Activated T-helper 1 cell treated with anti-CD3 and anti-CD28 coated beads, Interleukin-12 subunit alpha, Interleukin-12 subunit beta, Interleukin-2, Interleukin-4 antibody, amounts not matched to agents 30 ng/mL and 10 ng/mL and 1 ng/mL, durations not matched to agents 14 hours and 24 hours and 36 hours (primary cell): ENCODE measurements at regions of chr1 and their contacts with region 1.

Region 1: DNA sequence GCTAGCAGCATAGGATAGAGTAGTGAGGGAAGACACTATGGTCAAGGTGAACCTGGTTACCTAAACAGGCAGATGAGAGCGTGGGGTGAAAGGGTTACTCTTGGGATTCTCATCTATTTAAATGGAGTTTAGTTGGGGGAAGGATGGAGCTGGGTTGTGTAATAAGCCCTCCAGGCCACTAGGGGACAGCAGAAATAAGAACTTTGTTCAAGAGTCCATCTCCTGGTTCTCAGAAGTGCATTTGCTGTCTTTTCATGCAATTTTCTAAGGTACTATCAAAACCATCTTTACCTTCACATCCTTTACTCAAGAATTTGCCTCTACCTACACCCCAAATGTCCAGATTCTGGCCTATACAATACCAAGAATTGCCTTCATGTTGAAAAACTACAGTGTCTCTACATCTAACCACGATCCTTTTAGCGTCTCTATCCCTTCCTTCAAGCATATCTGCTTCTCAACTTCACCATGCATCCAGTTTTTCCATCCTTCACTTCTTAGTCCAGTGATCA is 28.0 kb downstream of the SLAMF1 start:
- DNase-seq: no peak
- H3K4me3 Mint-ChIP-seq: peak overlapping the region; percentile 24
- H3K27ac Mint-ChIP-seq: peak overlapping the region; percentile 51
- H3K4me1 Mint-ChIP-seq: peaks cover 76% of the 10 kb centered on the region
- H3K27me3 Mint-ChIP-seq: no peaks in the 10 kb centered on the region

Region 2: DNA sequence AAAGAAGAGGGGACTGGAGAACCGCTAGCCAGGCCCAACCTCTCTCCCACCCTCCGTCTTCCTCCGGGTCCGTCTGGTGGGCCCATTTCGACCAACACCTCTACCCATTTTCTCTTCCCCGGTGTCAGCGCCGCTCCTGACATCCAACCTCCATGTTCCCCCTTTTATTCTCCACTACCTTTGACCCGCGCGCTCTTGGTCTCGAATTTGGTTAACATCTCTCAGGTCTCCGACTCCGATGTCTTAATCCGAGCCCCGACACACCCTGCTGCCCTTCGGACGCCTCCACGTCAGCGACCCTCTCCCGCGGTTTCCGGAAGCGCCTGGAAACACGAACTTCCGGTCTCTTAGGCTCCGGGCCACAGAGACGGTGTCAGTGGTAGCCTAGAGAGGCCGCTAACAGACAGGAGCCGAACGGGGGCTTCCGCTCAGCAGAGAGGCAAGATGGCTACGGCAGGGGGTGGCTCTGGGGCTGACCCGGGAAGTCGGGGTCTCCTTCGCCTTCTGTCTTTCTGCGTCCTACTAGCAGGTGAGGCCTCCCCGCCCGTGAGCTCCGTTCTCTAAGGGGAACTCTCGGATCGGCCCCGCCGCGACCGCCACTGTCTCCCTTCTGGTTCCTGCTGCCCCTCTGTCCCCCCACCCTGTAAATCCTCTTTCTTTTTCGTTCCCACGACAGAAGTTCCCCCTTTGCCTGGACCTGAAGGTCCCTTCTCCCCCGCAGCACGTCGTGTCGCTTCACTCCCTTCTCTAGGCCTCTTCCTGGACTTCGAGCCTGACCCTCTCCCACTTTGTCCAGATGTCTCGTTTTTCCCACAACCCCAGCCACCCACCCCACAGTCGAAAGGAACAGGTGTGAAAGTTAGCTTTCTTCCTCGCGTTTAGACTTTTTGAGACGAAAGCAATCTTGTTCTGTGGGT is 275.6 kb before region 1 on chr1 and contains the starts of genes COPA and NCSTN:
- intact Hi-C with region 1: loop called (anchors 5 kb)
- DNase-seq: peak; percentile 88
- H3K4me3 Mint-ChIP-seq: peak within 1 kb of the TSS; percentile 100
- H3K27ac Mint-ChIP-seq: peak within 1 kb of the TSS; percentile 99
- H3K4me1 Mint-ChIP-seq: peaks cover 61% of the 10 kb centered on the region
- H3K27me3 Mint-ChIP-seq: no peaks in the 10 kb centered on the region
- total RNA-seq, gene COPA: 123 and 126 TPM in 2 replicates
- total RNA-seq, gene NCSTN: 74.8 and 81.6 TPM in 2 replicates

Region 3: GRCh38 chr1:160575112-160575664 is 43.6 kb before region 1 on chr1:
- intact Hi-C with region 1: loop called (anchors 2 kb)
- DNase-seq: no peak
- H3K4me3 Mint-ChIP-seq: peak overlapping the region; percentile 79
- H3K27ac Mint-ChIP-seq: peak overlapping the region; percentile 84
- H3K4me1 Mint-ChIP-seq: peaks cover 96% of the 10 kb centered on the region
- H3K27me3 Mint-ChIP-seq: no peaks in the 10 kb centered on the region